BJ (cell line): ENCODE measurements at regions of chr18 and their contacts with region 1.

Region 1: GRCh38 chr18:8988261-8988871 is 114.1 kb upstream of the NDUFV2 start:
- DNase-seq: no peak
- H3K4me3 ChIP-seq: no peak overlapping the region
- H3K27me3 ChIP-seq: no peaks in the 10 kb centered on the region
- CTCF ChIP-seq: peak; percentile 89

Region 2: GRCh38 chr18:8654503-8655451 is 333.6 kb before region 1 on chr18:
- CTCF ChIA-PET with region 1: interaction called, 75 read pairs
- POLR2A ChIA-PET with region 1: no interaction called
- DNase-seq: no peak
- H3K4me3 ChIP-seq: no peak overlapping the region
- H3K27me3 ChIP-seq: 0 out of 2 replicates have a peak, but pooled peaks cover 1% of the 10 kb centered on the region
- CTCF ChIP-seq: peak; percentile 62

Region 3: DNA sequence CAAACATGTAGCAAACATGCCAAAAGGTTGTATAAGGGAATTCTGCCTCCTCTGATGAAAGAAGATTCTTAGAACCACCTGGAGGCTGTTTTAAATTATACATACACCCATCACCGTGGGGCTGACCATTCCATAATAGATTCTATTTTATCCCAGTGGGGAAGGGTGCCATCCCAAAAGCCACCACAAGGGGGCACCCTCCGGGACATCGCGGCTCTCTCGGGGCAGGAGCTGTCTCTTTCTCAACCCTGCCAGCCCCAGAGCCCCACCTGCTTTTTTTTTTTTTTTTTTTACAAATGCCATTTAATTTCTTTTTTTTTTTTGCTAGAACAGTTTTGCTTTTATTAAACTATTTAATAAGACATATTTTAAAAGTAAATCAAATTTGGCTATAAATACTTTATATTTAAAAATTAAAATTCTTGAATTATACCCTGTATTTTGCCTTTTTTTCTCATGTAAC is 291.6 kb before region 1 on chr18:
- CTCF ChIA-PET with region 1: interaction called, 32 read pairs
- POLR2A ChIA-PET with region 1: no interaction called
- DNase-seq: no peak
- H3K4me3 ChIP-seq: no peak overlapping the region
- H3K27me3 ChIP-seq: no peaks in the 10 kb centered on the region
- CTCF ChIP-seq: peak; percentile 92

Region 4: DNA sequence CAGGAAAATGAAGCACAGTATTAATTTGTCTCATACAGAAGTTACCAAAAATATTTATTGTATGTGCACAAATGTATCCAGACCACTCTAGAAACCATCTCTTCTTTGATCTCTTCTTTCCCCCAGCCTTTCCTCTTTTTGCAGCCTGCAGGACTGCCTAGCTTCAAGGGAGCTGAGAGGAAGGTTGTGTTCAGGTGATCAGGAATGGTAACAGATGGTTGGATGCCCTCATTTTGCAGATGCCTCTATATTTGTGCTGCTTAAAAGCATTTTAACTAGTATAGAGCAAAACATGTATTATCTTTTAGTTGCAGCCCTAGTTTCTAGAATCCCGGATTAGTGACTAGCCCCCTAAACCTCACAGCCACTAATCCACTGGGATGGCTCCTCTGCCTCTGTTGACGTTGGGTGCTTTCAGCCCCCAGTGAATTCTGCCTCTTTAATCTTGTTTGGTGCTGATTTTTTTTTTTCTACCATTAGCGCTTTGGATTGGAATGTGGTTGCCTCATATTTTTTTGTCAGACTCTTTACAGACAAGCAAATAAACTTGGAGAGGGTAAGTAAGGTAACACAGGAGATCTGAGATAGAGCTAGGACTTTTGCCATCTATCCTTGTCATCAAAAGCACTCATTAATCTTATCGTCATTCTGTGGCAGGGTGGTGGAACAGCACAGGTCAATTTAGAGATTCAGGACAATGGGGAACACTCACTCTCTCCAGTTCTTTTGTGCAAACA is 10.3 kb after region 1 on chr18:
- CTCF ChIA-PET with region 1: interaction called, 10 read pairs
- POLR2A ChIA-PET with region 1: no interaction called
- DNase-seq: no peak
- H3K4me3 ChIP-seq: no peak overlapping the region
- H3K27me3 ChIP-seq: no peaks in the 10 kb centered on the region
- CTCF ChIP-seq: no peak